ENCODE measurements at regions of chr16 and their contacts with region 1.

Region 1: GRCh38 chr16:87375426-87376135 is 8.0 kb downstream of the FBXO31 start:
- DNase-seq: peak; percentile 72

Region 2: GRCh38 chr16:87324411-87325275 is 50.9 kb before region 1 on chr16:
- intact Hi-C with region 1: loop called in 1 of 2 experiments (anchors 10 kb)
- DNase-seq: peak; percentile 67

Region 3: GRCh38 chr16:87407511-87408112 is 32.0 kb after region 1 on chr16:
- intact Hi-C with region 1: no loop called
- DNase-seq: peak; percentile 89

Measured in posterior vena cava (tissue), 2 donors.